BJ (cell line): ENCODE measurements at regions of chr12 and their contacts with region 1.

Region 1: DNA sequence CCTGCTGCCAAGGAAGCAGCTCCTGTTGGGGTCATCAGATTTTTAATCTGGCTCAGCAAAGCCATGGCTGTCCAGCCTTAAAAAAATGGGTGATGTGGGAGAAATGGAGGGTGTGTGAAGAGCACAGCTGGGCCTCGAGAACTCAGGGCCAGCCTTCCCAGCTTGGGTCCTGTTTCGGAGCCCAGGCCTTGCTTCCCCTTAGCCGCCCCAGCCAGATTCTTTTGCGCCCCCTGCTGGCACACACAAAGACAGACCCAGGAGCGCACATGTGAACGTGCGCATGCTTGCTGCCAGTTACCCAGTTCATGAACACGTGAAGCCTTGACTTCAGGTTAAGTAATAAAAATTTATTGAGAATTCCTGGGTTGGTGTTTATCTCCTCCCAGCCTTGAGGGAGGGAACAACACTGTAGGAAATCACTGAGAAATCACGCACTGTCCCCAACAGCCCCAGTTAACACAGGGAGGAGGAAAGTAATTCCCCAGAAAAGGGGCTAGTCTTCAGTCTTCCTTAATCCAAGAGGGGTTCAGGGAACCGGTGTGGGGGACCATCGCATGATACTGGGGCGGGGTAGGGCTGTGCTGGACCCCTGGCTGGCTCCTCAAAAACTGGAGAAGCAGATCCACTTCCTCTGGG is 5.3 kb downstream of the PHB2 start:
- DNase-seq: peak; percentile 37
- H3K4me3 ChIP-seq: no peak overlapping the region
- H3K27me3 ChIP-seq: no peaks in the 10 kb centered on the region
- CTCF ChIP-seq: peak; percentile 92

Region 2: DNA sequence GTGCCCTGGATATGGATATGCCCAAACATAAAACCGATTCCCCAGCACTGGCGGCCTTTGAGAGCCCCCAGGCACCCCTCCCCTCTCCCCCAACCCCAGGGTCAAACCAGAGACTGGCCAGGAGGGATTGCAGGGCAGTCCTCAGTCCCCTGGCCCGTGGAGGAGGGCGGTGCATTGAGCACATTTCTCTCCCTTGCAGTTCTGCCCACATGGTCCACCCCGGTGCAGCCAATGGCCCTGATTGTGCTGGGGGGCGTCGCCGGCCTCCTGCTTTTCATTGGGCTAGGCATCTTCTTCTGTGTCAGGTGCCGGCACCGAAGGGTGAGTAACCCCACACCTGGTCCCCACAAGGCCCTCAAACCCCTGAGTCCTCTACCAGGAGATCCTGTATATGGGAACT is 146.9 kb before region 1 on chr12:
- CTCF ChIA-PET with region 1: no interaction called
- POLR2A ChIA-PET with region 1: no interaction called
- DNase-seq: no peak
- H3K4me3 ChIP-seq: no peak overlapping the region
- H3K27me3 ChIP-seq: peaks cover 9% of the 10 kb centered on the region
- CTCF ChIP-seq: no peak

Region 3: DNA sequence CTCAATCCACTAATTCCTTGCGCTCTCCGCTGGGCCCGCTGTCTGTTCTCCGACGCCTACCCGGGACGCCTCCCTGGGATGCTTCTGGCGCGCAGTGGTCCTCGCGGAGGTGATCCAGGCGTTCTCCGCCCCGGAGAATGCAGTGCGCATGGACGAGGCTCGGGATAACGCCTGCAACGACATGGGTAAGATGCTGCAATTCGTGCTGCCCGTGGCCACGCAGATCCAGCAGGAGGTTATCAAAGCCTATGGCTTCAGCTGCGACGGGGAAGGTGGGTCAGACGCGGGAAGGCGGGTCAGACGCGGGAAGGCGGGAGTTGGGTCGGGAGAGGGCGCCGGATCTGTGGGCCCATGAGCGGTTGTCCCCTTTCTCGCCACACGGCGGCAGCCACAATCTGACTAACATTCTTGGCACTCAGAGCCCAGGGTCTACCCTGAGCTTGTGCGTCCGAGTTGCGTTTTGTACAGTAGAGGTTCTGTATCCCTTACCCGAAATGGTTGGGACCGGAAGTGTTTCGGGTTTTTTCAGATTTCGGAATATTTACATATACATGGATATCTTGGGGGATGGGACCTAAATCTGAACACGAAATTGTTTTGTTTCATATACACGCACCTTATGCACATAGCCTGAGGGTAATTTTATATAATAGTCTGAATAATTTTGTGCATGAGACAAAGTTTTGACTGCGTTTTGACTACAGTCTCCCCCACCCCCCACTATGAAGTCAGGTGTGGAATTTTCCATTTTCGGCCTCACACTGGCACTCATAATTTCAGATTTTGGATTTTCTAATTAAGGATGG is 20.6 kb before region 1 on chr12:
- CTCF ChIA-PET with region 1: interaction called, 65 read pairs
- POLR2A ChIA-PET with region 1: no interaction called
- DNase-seq: peak; percentile 57
- H3K4me3 ChIP-seq: peak overlapping the region; percentile 67
- H3K27me3 ChIP-seq: no peaks in the 10 kb centered on the region
- CTCF ChIP-seq: peak; percentile 87

Region 4: DNA sequence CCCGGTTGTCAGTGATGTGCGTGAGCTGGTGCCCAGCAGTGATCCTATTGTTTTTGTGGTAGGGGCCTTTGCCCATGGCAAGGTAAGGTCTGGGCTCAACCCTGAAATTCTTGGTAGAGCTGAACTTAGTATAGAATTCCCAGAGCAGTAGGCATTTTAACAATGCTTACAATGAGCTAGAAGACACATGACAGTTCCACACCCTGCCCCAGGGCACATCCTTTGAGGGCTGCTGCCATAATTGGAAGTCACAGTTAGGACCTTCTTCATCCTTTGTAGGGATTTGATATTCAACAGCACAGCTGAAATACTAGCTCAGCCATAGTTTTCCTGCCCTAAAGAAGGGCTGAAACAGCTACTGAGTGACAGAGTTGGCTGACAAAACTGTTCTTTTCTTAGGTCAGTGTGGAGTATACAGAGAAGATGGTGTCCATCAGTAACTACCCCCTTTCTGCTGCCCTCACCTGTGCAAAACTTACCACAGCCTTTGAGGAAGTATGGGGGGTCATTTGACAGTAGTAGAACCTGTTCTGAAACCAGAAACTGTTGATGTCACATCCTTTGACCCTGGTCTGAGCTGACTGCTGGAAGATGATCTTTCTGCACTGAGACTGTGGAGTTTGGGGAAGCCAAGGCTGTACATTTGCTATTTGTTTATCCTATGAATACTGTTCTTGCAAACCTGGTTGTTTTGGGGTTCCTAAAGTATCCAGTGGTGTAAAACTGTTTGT is 10.3 kb after region 1 on chr12:
- CTCF ChIA-PET with region 1: interaction called, 23 read pairs
- POLR2A ChIA-PET with region 1: no interaction called
- DNase-seq: no peak
- H3K4me3 ChIP-seq: no peak overlapping the region
- H3K27me3 ChIP-seq: no peaks in the 10 kb centered on the region
- CTCF ChIP-seq: no peak

Region 5: GRCh38 chr12:7175493-7175892 is 210.3 kb after region 1 on chr12:
- CTCF ChIA-PET with region 1: no interaction called
- POLR2A ChIA-PET with region 1: no interaction called
- DNase-seq: no peak
- H3K4me3 ChIP-seq: no peak overlapping the region
- H3K27me3 ChIP-seq: no peaks in the 10 kb centered on the region
- CTCF ChIP-seq: no peak